ENCODE measurements at regions of chr12 and their contacts with region 1.

Region 1: DNA sequence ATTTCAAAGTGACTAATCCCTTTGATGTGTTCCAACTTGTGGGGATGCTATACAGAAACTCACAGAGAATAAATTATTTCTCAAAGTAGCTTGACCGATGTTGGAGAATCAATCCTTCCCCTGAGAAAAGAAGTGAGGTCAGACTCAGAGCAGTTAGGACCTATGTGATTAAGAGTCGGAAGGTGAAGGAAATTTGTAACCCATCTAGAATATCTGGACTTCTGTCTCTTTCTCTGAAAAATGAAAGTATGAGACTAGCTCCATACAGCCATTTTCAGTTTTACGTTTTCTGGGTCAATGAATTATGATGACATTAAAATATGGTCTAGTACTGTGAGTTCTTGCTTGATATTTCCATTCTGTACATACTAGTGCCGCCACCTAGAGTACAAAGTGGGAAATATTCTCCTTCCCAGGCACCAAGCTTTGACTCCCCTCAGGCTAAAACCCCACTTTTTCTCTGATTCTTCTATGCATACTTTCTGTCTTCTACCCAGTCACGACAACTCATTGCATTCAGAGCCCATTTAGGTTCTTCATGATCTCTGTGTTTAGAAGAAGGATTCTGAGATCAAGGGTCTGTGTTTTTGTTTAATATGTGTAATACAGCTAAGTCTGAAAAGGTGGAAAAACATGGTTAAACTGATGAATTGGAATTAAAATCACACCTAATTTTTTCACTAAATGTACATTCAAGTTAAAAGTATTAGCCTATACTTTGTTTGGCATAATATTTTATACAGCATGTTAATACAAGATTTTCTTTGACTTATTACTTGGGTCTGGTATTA is 6.9 kb upstream of the NTS start:
- DNase-seq: peak; percentile 55
- CTCF ChIP-seq: peak; percentile 80

Region 2: DNA sequence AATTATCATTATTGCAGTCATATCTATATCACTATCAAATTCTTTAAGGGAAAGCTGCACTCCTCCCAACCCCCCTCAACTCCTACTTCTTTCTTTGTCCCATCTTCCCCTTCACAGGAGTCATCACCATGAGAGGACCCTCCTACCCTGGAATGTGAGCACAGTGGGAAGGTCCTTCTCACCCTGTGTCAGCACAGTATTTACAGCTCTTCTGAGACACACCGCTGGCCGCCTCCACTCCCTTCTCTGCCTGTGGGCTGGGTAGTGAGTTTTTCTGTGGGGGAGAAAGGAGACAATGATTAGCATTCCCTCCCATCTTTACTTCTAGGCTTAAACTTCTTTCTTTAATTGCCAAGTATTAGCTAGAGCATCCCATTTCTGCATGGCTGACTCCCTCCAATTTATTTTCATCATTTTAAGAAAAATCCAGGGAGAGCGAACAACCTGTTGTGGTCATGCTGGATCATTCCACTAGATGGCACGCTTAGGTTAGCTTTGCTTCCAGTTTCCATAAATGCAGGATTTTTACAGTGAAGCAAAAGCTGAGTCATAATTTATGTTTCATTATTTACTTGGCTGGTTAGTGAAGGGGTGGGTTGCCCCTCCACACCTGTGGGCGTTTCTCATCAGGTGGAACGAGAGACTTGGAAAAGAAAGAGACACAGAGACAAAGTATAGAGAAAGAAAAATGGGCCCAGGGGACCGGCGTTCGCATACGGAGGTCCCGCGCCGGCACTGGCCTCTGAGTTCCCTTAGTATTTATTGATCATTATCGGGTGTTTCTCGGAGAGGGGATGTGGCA is 398.6 kb before region 1 on chr12:
- CTCF ChIA-PET with region 1: interaction called, 74 read pairs
- POLR2A ChIA-PET with region 1: no interaction called
- DNase-seq: peak; percentile 55
- CTCF ChIP-seq: peak; percentile 80

Region 3: DNA sequence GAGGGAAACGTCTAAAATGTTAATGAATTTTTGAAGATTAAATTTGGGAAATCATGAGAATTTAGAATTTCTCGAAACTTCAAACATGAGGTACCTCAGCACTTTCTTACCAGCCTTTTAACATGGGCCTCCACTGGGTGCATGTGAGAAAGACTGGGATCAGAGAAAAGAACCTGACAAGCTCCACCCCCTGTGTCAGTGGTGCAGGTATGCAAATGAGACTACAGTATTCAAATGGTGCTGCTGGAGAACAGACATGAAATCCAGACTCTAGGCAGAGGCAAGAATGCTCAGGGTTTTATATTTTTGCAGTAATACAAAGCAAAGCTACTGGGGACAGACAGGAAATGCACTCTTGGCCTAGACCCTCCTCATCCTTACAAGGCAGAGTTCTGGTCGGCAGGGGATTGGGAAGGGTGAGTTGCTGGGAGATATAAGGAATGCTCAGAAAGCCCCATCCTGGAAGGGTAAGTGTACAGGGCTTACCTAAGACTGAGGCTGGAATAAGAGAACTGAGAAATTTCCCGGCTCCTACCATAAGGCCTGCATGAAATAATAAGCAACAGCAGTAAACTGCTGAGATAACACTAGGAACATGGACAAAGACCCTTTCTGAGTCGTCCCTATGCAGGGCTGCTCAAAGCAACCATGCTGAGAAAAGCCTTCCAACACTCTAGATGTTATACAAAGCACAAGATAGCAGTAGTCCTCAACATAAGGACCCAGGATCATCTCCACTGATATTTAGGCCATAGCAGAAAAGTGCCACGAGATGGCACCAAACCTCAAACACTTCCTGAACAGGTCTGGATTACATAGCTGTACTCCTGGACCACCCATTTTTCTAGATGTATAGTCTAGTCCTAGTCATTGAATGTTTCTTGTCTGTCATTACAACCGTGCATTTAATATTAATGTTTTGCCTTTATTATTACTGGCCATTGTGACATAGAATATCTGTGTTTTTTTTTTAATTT is 291.8 kb before region 1 on chr12:
- CTCF ChIA-PET with region 1: interaction called, 34 read pairs
- POLR2A ChIA-PET with region 1: no interaction called
- DNase-seq: peak; percentile 44
- CTCF ChIP-seq: peak; percentile 65

Region 4: DNA sequence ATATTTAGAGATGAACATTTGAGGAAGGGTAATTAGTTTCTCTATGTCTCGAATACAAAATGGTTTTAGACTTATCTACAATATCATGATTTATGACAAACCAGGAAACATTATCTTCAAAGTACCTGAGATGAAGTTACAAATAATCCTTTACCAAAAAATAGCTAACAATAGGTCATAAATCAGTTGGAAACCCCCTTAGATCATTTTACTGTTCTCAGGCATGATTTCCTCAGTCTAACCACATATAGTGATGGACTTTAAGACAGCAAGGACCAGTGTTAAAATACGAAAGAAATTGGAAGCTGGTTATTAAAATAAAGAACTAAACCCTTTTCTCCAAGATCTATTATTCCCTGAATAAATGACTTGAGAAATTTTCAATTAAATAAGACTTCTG is 266.3 kb before region 1 on chr12:
- CTCF ChIA-PET with region 1: no interaction called
- POLR2A ChIA-PET with region 1: no interaction called
- DNase-seq: no peak
- CTCF ChIP-seq: no peak

Region 5: GRCh38 chr12:85697003-85697402 is 170.2 kb before region 1 on chr12:
- CTCF ChIA-PET with region 1: no interaction called
- POLR2A ChIA-PET with region 1: no interaction called
- DNase-seq: no peak
- CTCF ChIP-seq: no peak

Region 6: GRCh38 chr12:85784096-85784720 is 83.0 kb before region 1 on chr12:
- CTCF ChIA-PET with region 1: no interaction called
- POLR2A ChIA-PET with region 1: no interaction called
- DNase-seq: no peak
- CTCF ChIP-seq: no peak

Region 7: DNA sequence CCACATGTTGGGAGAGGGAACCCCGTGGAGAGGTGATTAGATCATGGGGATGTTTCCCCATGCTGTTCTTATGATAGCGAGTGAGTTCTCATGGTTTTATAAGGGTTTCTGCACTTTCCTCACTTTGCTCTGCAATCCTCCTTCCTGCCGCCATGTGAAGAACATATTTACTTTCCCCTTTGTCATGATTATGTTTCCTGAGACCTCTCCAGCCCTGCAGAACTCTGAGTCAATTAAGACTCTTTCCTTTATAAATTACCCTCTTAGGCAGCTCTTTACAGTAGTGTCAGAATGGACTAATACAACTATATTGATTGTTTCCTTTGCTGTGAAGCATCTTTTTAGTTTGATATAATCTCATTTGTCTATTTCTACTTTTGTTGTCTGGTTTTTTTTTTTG is 17.8 kb before region 1 on chr12:
- CTCF ChIA-PET with region 1: interaction called, 46 read pairs
- POLR2A ChIA-PET with region 1: no interaction called
- DNase-seq: no peak
- CTCF ChIP-seq: no peak